ENCODE measurements at regions of chr1 and their contacts with region 1.

Region 1: GRCh38 chr1:212035123-212035834 is at the starts of genes DTL and INTS7:
- DNase-seq: peak; percentile 96
- H3K4me3 ChIP-seq: peak within 1 kb of the TSS; percentile 65
- H3K27me3 ChIP-seq: no peaks in the 10 kb centered on the region
- CTCF ChIP-seq: peak; percentile 97
- polyA plus RNA-seq, gene DTL: 7.7 and 8.3 TPM in 2 replicates
- polyA plus RNA-seq, gene INTS7: 11.6 and 18.4 TPM in 2 replicates

Region 2: GRCh38 chr1:211680752-211681327 is 354.4 kb before region 1 on chr1:
- CTCF ChIA-PET with region 1: interaction called, 92 read pairs
- POLR2A ChIA-PET with region 1: no interaction called
- DNase-seq: peak; percentile 52
- H3K4me3 ChIP-seq: no peak overlapping the region
- H3K27me3 ChIP-seq: no peaks in the 10 kb centered on the region
- CTCF ChIP-seq: peak; percentile 70

Region 3: DNA sequence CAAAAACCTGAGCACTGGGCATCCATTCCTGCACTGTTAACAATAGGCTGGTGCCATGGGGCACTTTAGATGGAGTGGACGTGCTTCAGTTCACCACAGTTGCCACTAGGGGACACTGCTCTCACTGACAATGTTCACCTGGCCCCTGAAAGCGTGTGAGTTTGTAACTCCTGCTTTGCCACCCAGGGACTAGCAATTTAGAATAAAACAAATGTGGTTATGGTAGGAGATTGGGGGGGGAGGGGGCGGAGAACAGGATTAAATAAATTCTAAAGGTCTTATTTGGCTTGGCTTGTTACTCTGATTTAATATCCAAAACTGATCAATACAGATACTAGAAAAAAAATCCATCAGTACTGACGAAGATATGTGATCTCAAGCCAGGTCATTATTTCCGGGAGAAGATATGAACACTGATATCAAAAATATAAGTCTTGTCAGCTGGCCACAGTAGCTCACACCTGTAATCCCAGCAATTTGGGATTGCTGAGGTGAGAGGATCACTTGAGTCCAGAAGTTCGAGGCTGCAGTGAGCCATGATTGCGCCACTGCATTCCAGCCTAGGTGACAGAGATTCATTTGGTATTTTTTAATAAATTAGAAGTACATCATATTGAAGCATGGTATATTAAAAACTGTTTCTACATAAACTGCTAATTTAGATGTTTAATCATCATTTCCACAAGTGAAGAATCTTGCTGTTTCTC is 23.1 kb before region 1 on chr1:
- CTCF ChIA-PET with region 1: interaction called, 41 read pairs
- POLR2A ChIA-PET with region 1: interaction called, 3 read pairs
- DNase-seq: no peak
- H3K4me3 ChIP-seq: no peak overlapping the region
- H3K27me3 ChIP-seq: no peaks in the 10 kb centered on the region
- CTCF ChIP-seq: peak; percentile 97

Region 4: GRCh38 chr1:212045981-212046380 is 10.7 kb after region 1 on chr1:
- CTCF ChIA-PET with region 1: interaction called, 20 read pairs
- POLR2A ChIA-PET with region 1: no interaction called
- DNase-seq: no peak
- H3K4me3 ChIP-seq: no peak overlapping the region
- H3K27me3 ChIP-seq: no peaks in the 10 kb centered on the region
- CTCF ChIP-seq: no peak

Region 5: GRCh38 chr1:212455803-212456528 is 420.7 kb after region 1 on chr1:
- CTCF ChIA-PET with region 1: interaction called, 17 read pairs
- POLR2A ChIA-PET with region 1: interaction called, 3 read pairs
- DNase-seq: peak; percentile 15
- H3K4me3 ChIP-seq: no peak overlapping the region
- H3K27me3 ChIP-seq: no peaks in the 10 kb centered on the region; the same call in 1 of the 2 replicates
- CTCF ChIP-seq: peak; percentile 97

Measured in BJ (cell line).